ENCODE measurements at regions of chr13 and their contacts with region 1.

Region 1: DNA sequence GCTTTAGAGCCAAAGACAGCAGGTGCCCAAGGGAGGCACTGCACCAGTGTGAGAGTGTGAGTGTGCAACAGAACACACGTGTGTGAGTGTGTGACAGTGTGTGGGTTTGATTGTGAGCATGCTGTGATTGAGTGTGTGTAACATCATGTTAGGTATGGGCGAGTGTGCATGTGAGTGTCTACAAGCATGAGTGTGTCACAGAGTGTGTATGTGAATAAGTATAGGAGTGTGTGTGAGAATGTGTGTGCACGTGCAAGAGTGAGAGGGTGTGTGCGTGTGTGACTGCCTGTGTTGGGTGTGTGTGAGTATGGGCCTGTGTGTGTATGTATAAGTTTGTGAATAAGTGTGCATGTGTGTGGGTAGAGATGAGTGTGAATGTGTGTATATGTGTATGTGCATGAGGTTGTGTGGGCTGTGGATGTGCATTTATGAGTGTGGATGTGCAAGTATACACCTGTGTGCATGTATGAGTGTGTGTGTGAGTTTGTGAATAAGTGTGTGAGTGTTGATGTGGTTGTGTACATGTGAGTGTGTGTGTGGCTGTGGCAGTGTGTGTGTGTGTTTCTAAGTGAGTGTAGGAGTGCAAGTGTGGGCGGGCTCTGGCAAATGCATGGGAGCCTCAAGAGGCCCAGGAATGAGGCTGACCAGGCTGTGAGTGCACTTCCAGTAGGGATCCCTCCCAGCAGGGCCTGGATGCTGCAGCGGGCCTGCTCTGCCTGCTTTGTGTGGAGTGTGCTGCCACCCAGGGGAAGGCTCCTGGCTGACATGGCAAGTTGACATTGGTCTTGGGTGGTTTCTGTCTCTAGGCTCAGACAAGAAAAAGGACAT is 198.4 kb downstream of the COL4A1 start:
- DNase-seq: peak; percentile 87
- H3K4me3 Mint-ChIP-seq: no peak overlapping the region
- H3K27ac Mint-ChIP-seq: no peak overlapping the region
- H3K4me1 Mint-ChIP-seq: peaks cover 37% of the 10 kb centered on the region
- H3K27me3 Mint-ChIP-seq: no peaks in the 10 kb centered on the region
- CTCF ChIP-seq: peak; percentile 84

Region 2: GRCh38 chr13:109256866-109257760 is 851.4 kb before region 1 on chr13:
- CTCF ChIA-PET with region 1: interaction called, 3 read pairs
- POLR2A ChIA-PET with region 1: interaction called, 3 read pairs
- intact Hi-C with region 1: loop called (anchors 5 kb)
- DNase-seq: peak; percentile 99
- H3K4me3 Mint-ChIP-seq: peak overlapping the region; percentile 48
- H3K27ac Mint-ChIP-seq: peak overlapping the region; percentile 96
- H3K4me1 Mint-ChIP-seq: peaks cover 47% of the 10 kb centered on the region
- H3K27me3 Mint-ChIP-seq: no peaks in the 10 kb centered on the region
- CTCF ChIP-seq: no peak

Region 3: DNA sequence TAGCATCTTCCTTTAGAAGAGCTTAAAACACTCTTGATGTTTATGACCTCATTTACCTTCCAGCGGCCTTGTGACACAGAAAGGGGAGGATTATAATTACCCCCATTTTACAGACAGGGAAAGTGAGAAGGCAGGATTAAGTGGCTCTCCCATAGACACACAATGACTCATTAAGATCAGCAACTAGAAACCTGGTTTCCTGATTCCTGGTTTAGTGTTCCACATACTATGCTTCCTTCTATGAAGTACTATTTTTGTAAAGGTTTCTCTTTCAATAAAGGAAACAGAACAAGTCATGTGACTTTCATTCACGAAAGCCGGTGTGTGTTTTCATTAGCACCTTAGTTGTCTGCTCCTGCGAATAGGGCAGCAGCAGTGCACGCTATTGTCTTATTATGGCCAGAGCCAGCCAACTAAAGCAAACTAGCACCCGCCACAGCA is 330.4 kb before region 1 on chr13:
- CTCF ChIA-PET with region 1: interaction called, 4 read pairs
- POLR2A ChIA-PET with region 1: interaction called, 21 read pairs
- intact Hi-C with region 1: no loop called
- DNase-seq: peak; percentile 81
- H3K4me3 Mint-ChIP-seq: peak overlapping the region; percentile 84
- H3K27ac Mint-ChIP-seq: peak overlapping the region; percentile 70
- H3K4me1 Mint-ChIP-seq: peaks cover 54% of the 10 kb centered on the region
- H3K27me3 Mint-ChIP-seq: no peaks in the 10 kb centered on the region
- CTCF ChIP-seq: no peak

Region 4: DNA sequence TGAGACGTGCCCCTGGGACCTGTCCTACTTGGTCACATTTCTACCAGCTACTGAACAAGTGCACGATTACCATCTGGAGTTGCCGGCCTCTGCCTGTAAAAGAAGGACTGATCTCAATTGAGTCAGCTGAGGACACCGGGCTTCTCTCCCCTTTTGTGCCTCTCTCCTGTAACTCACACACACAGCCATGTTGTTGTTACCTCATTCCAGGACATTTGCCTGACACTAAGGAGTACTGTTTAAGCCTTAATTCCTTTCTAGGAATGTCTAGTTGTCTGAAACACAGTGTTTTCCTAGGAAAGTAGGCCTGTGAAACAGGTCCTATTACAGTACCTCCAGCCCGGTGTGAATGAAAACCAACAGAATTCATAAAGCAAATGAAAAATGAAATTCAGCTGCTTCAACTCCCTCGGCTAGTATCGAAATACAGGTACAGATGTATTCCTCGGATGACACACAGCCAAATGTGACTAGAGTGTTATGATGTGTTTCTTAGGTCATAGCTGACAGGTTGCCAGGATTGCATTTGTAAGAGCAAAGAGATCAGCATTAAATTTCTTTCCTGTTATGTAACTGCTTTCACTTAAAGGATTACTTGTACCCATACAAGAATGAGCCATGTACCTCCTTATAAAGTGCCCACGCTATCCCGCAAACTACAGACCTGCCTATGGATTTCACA is 170.2 kb before region 1 on chr13:
- CTCF ChIA-PET with region 1: interaction called, 6 read pairs
- POLR2A ChIA-PET with region 1: no interaction called
- intact Hi-C with region 1: loop called (anchors 5 kb)
- DNase-seq: peak; percentile 87
- H3K4me3 Mint-ChIP-seq: no peak overlapping the region
- H3K27ac Mint-ChIP-seq: no peak overlapping the region
- H3K4me1 Mint-ChIP-seq: no peaks in the 10 kb centered on the region
- H3K27me3 Mint-ChIP-seq: no peaks in the 10 kb centered on the region
- CTCF ChIP-seq: no peak

Region 5: DNA sequence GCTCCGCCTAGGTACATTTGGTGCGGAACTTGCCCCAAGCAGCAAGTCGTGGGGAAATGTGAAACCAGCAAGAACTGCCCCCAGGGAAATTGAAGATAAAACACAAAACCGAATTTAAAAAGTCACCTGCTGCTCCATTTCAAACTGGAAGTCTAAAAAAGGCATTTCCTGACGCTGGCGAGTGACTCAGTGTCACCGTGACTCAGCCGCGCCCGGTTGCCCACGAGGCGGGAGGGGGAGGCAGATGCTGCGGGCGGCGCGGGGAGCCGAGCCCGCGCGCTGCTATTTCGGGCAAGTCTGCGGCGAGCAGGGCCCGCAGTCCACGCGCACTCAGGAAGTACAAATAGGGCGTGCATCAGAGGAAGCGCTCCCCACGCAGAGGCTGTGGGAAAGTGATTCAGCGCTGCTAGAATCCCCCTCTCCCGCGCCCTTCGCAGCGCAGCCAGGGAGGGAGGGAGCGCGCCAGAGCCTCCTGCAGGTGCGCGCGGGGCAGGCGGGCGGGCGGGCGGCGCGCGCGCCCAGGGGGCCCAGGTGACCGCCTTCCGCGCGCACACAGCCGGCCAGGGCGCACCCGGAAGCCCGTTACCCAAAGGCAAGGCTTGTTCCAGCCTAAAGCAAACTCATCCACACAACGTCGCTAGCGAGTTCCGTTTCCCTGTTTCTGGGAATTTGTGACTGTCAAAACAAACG is 29.6 kb after region 1 on chr13:
- CTCF ChIA-PET with region 1: interaction called, 10 read pairs
- POLR2A ChIA-PET with region 1: interaction called, 3 read pairs
- intact Hi-C with region 1: loop called (anchors 2 kb)
- DNase-seq: peak; percentile 83
- H3K4me3 Mint-ChIP-seq: peak overlapping the region; percentile 87
- H3K27ac Mint-ChIP-seq: peak overlapping the region; percentile 86
- H3K4me1 Mint-ChIP-seq: no peaks in the 10 kb centered on the region
- H3K27me3 Mint-ChIP-seq: no peaks in the 10 kb centered on the region
- CTCF ChIP-seq: no peak

Region 6: GRCh38 chr13:110330491-110331001 is 222.0 kb after region 1 on chr13:
- CTCF ChIA-PET with region 1: no interaction called
- POLR2A ChIA-PET with region 1: no interaction called
- intact Hi-C with region 1: no loop called
- DNase-seq: no peak
- H3K4me3 Mint-ChIP-seq: no peak overlapping the region
- H3K27ac Mint-ChIP-seq: no peak overlapping the region
- H3K4me1 Mint-ChIP-seq: peaks cover 14% of the 10 kb centered on the region
- H3K27me3 Mint-ChIP-seq: no peaks in the 10 kb centered on the region
- CTCF ChIP-seq: no peak

Region 7: GRCh38 chr13:110475550-110476219 is 367.1 kb after region 1 on chr13:
- CTCF ChIA-PET with region 1: no interaction called
- POLR2A ChIA-PET with region 1: no interaction called
- intact Hi-C with region 1: no loop called
- DNase-seq: no peak
- H3K4me3 Mint-ChIP-seq: no peak overlapping the region
- H3K27ac Mint-ChIP-seq: no peak overlapping the region
- H3K4me1 Mint-ChIP-seq: no peaks in the 10 kb centered on the region
- H3K27me3 Mint-ChIP-seq: no peaks in the 10 kb centered on the region
- CTCF ChIP-seq: no peak